ENCODE measurements at regions of chr1 and their contacts with region 1.

Region 1: GRCh38 chr1:100351095-100351891 is 1.0 kb upstream of the CDC14A start:
- DNase-seq: peak; percentile 93
- H3K4me3 ChIP-seq: peak overlapping the region; percentile 96
- H3K27ac ChIP-seq: peak overlapping the region; percentile 66
- H3K4me1 ChIP-seq: peaks cover 24% of the 10 kb centered on the region
- CTCF ChIP-seq: peak; percentile 74

Region 2: GRCh38 chr1:99808391-99809115 is 542.7 kb before region 1 on chr1:
- CTCF ChIA-PET with region 1: no interaction called
- POLR2A ChIA-PET with region 1: no interaction called
- intact Hi-C with region 1: loop called (anchors 5 kb)
- DNase-seq: peak; percentile 84
- H3K4me3 ChIP-seq: no peak overlapping the region
- H3K27ac ChIP-seq: no peak overlapping the region
- H3K4me1 ChIP-seq: peaks cover 5% of the 10 kb centered on the region
- CTCF ChIP-seq: peak; percentile 87

Region 3: GRCh38 chr1:99969729-99970621 is 381.3 kb before region 1 on chr1 and contains the start of gene SLC35A3:
- CTCF ChIA-PET with region 1: interaction called, 13 read pairs
- POLR2A ChIA-PET with region 1: interaction called, 3 read pairs
- intact Hi-C with region 1: no loop called
- DNase-seq: peak; percentile 92
- H3K4me3 ChIP-seq: peak within 1 kb of the TSS; percentile 91
- H3K27ac ChIP-seq: peak within 1 kb of the TSS; percentile 74
- H3K4me1 ChIP-seq: peaks cover 19% of the 10 kb centered on the region
- CTCF ChIP-seq: no peak
- total RNA-seq, gene SLC35A3: 15.9 and 26.8 TPM in 2 replicates

Region 4: GRCh38 chr1:100132566-100133477 is 218.5 kb before region 1 on chr1 and contains the starts of genes SASS6 and TRMT13:
- CTCF ChIA-PET with region 1: no interaction called
- POLR2A ChIA-PET with region 1: no interaction called
- intact Hi-C with region 1: loop called (anchors 2 kb)
- DNase-seq: peak; percentile 97
- H3K4me3 ChIP-seq: peak within 1 kb of the TSS; percentile 96
- H3K27ac ChIP-seq: peak within 1 kb of the TSS; percentile 74
- H3K4me1 ChIP-seq: peaks cover 30% of the 10 kb centered on the region
- CTCF ChIP-seq: no peak
- total RNA-seq, gene SASS6: 12.1 and 12.6 TPM in 2 replicates
- total RNA-seq, gene TRMT13: 14.5 and 24.2 TPM in 2 replicates

Region 5: DNA sequence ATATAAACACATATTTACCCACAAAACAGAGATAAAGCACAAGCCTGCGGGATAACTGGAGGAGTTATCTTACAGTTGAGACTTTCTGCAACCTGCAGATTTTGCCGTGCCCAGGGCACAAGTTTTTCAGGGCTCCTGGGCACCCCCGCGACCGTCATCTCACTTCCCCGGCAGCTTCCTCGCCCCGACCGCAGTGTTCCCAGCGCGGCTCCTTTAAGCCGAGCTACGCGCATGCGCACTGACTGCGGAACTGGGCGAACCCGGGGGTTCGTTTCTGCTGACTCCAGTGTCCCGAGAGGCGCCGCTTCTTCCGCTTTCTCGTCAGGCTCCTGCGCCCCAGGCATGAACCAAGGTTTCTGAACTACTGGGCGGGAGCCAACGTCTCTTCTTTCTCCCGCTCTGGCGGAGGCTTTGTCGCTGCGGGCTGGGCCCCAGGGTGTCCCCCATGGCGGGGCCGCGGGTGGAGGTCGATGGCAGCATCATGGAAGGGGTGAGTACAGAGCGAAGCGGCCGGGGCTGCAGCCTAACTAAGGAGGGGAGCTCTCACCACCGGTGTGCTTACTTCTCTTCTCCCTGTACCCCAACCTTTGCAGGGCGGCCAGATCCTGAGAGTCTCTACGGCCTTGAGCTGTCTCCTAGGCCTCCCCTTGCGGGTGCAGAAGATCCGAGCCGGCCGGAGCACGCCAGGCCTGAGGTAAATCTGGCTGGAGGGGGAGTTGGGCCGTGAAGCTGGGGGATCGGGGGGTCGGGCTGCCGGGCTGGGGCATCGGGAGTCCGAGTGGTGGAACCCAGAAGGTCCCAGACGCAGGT is 85.2 kb before region 1 on chr1 and contains the start of gene RTCA:
- CTCF ChIA-PET with region 1: no interaction called
- POLR2A ChIA-PET with region 1: interaction called, 6 read pairs
- intact Hi-C with region 1: loop called (anchors 2 kb)
- DNase-seq: peak; percentile 99
- H3K4me3 ChIP-seq: peak within 1 kb of the TSS; percentile 100
- H3K27ac ChIP-seq: peak within 1 kb of the TSS; percentile 68
- H3K4me1 ChIP-seq: peaks cover 19% of the 10 kb centered on the region
- CTCF ChIP-seq: no peak
- total RNA-seq, gene RTCA: 25.9 and 45.4 TPM in 2 replicates

Region 6: DNA sequence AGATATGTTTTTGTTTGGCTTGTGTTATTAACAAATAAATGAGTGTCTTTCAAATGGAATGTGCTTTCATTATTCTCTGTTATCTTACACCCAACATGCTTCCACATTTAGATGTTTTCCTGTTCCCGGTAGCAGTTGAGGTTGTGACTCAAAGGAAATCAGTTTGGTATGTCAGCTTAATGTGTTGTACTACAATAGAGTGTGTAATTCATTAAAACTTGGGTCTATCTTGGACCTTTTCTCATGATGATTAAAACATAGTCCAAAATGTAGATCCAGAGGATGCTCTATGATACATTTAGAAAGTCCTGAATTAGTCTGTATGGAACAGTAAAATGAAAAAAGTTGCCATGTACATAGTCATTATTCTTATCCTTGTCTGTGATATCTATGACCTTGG is 58.6 kb before region 1 on chr1:
- CTCF ChIA-PET with region 1: no interaction called
- POLR2A ChIA-PET with region 1: no interaction called
- intact Hi-C with region 1: no loop called
- DNase-seq: no peak
- H3K4me3 ChIP-seq: no peak overlapping the region
- H3K27ac ChIP-seq: no peak overlapping the region
- H3K4me1 ChIP-seq: no peaks in the 10 kb centered on the region
- CTCF ChIP-seq: no peak

Region 7: DNA sequence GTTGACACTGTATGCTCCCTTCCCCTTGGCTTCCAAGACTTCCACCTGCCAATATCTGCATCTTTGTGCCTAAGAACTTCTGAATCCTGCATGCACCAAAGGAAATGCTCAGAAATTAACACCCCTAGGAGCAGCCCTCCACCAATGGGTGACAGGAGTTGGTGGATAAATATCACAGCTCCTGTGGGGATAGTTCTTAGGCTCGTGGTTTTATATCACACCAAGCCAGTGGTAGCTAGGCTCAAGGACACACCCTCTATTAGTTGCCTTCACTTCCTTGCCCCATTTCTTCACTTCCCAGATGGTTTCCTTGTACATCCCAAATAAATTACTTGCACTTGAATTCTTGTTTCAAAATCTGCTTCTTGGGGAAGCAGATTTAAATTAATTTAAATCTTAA is 15.9 kb before region 1 on chr1:
- CTCF ChIA-PET with region 1: no interaction called
- POLR2A ChIA-PET with region 1: no interaction called
- intact Hi-C with region 1: no loop called
- DNase-seq: no peak
- H3K4me3 ChIP-seq: no peak overlapping the region
- H3K27ac ChIP-seq: no peak overlapping the region
- H3K4me1 ChIP-seq: no peaks in the 10 kb centered on the region
- CTCF ChIP-seq: no peak

Region 8: DNA sequence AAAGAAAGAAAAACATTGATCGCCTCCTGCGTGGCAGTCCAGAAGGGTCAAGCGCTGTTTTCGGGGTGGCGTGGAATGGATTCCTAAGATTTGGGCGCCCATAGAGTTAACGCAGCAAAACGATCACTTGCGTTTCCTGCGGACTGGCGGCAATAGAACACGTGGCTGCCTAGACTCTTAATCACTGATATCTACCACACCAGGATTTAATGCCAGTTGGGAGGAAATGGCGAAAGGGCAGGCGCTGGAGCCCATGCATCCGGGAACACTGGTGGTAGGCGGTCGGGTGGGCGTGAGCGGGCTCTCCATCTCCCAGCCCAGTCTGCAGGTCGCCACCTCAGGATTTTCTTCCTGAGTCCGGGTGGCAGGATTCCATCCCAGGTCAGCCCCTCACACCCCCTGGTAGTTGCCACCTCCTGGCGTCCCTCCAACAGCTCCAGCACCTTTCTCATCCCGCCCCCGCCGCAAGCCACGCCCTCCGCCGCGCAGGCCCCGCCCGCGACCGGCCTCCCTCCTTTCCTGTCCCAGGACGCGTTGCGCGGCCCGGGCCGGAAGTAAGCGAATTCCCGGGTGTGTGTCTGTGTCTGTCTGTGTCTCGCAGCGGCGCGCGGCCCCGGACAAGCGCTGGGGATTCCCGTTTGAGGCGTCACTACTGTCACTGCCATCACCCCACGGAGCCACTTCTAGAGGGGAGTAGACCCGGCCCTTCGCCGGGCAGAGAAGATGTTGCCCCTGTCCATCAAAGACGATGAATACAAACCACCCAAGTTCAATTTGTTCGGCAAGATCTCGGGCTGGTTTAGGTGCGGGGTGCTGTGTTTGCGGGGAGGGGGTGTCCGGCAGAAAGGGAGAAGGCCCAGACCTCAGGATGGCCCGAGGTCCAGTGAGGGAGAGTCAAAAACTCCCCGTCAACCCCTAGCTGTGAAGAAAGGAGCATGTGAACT is 544.5 kb after region 1 on chr1 and contains the start of gene SLC30A7:
- CTCF ChIA-PET with region 1: no interaction called
- POLR2A ChIA-PET with region 1: interaction called, 3 read pairs
- intact Hi-C with region 1: loop called (anchors 1 kb)
- DNase-seq: peak; percentile 88
- H3K4me3 ChIP-seq: peak within 1 kb of the TSS; percentile 99
- H3K27ac ChIP-seq: peak within 1 kb of the TSS; percentile 77
- H3K4me1 ChIP-seq: peaks cover 30% of the 10 kb centered on the region
- CTCF ChIP-seq: no peak
- total RNA-seq, gene SLC30A7: 5.5 and 8.6 TPM in 2 replicates